ENCODE measurements at regions of chr4 and their contacts with region 1.

Region 1: DNA sequence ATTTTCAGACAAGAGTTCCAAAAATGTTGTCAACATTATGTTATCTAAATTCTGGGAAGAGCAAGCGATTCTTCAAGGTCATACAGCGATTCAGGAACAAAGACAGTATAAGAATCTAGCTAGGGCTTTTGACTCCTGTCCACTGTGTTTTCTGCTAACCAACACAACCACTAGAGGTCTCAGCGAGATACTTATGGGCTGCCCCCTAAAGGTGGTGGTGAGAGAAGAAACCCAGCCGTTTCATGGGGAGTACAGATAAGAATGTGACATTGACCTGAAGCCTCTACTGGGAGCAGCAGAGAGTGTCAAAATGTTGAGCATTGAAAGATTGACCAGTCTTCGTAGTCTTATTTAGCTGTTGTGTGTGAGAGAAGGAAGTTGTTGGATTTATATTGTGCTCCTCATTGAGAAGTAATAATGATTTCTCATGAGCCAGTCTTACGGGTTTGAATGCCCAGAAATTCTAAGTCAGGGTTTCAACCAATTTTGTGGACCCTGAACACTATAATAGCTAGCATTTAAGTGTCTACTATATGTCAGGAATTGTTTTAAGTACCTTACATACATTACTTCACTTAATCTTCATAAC is 168.3 kb downstream of the SPRY1 start:
- DNase-seq: peak; percentile 69
- ATAC-seq: peak; percentile 77; the same call in 1 of the 2 replicates
- H3K4me3 ChIP-seq: no peak overlapping the region
- H3K27ac ChIP-seq: no peak overlapping the region
- H3K4me1 ChIP-seq: peaks cover 10% of the 10 kb centered on the region
- H3K27me3 ChIP-seq: no peaks in the 10 kb centered on the region
- CTCF ChIP-seq: peak; percentile 95
- POLR2A ChIP-seq: no peak
- RAD21 ChIP-seq: peak; percentile 68

Region 2: GRCh38 chr4:123127218-123127617 is 437.6 kb before region 1 on chr4:
- CTCF ChIA-PET with region 1: no interaction called
- POLR2A ChIA-PET with region 1: no interaction called
- dilution Hi-C with region 1: no loop called
- in situ Hi-C with region 1: no loop called
- intact Hi-C with region 1: loop called (anchors 10 kb)
- DNase-seq: peak; percentile 42
- ATAC-seq: peak; percentile 83
- H3K4me3 ChIP-seq: no peak overlapping the region
- H3K27ac ChIP-seq: no peak overlapping the region
- H3K4me1 ChIP-seq: no peaks in the 10 kb centered on the region
- H3K27me3 ChIP-seq: no peaks in the 10 kb centered on the region
- CTCF ChIP-seq: peak; percentile 56
- POLR2A ChIP-seq: no peak
- RAD21 ChIP-seq: peak; percentile 61

Region 3: GRCh38 chr4:123631786-123632692 is 67.2 kb after region 1 on chr4:
- CTCF ChIA-PET with region 1: no interaction called
- POLR2A ChIA-PET with region 1: no interaction called
- dilution Hi-C with region 1: no loop called
- in situ Hi-C with region 1: no loop called
- intact Hi-C with region 1: no loop called
- DNase-seq: peak; percentile 43
- ATAC-seq: no peak
- H3K4me3 ChIP-seq: no peak overlapping the region
- H3K27ac ChIP-seq: no peak overlapping the region; the same call in 1 of the 2 replicates
- H3K4me1 ChIP-seq: peaks cover 1% of the 10 kb centered on the region; the same call in 1 of the 2 replicates
- H3K27me3 ChIP-seq: no peaks in the 10 kb centered on the region
- CTCF ChIP-seq: no peak
- POLR2A ChIP-seq: no peak
- RAD21 ChIP-seq: no peak

Measured in IMR-90 (cell line).